ENCODE measurements at regions of chr9 and their contacts with region 1.

Region 1: DNA sequence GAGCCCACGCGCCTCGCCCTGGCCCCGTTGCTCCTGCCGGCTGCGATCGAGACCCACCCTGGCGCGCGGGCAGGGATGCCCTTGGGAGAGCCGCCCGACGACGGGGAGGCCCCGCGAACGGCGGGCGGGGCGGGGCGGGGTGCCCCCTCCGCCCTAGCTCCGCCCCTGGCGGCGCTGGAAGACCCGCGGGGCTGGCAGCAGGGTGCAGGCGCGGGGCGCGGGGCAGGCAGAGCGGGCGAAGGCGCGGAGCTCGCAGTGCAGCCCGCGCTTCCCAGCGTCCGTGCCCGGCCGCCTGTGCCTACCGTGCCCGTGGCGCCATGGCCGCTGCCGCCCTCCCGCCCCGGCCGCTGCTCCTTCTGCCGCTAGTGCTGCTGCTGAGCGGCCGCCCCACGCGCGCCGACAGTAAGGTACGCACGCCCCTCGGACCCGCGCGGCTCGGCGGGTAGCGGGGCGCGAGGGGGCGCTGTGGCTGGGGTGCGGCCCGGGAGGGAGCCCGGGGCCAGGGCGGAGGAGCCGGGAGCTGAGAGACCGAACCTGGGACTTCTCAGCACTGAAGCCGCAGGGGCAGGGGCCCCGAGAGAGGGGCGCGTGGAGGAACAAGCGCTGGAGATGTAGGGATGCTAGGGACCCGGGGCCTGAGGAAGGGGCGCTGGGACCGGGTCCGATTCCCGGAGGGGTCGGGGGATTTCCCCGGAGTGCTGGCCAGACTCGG is at the start of gene OLFML2A:
- DNase-seq: peak; percentile 61
- CTCF ChIP-seq: peak; percentile 45

Region 2: GRCh38 chr9:124749781-124750180 is 27.3 kb before region 1 on chr9:
- CTCF ChIA-PET with region 1: no interaction called
- POLR2A ChIA-PET with region 1: no interaction called
- DNase-seq: no peak
- CTCF ChIP-seq: no peak

Region 3: DNA sequence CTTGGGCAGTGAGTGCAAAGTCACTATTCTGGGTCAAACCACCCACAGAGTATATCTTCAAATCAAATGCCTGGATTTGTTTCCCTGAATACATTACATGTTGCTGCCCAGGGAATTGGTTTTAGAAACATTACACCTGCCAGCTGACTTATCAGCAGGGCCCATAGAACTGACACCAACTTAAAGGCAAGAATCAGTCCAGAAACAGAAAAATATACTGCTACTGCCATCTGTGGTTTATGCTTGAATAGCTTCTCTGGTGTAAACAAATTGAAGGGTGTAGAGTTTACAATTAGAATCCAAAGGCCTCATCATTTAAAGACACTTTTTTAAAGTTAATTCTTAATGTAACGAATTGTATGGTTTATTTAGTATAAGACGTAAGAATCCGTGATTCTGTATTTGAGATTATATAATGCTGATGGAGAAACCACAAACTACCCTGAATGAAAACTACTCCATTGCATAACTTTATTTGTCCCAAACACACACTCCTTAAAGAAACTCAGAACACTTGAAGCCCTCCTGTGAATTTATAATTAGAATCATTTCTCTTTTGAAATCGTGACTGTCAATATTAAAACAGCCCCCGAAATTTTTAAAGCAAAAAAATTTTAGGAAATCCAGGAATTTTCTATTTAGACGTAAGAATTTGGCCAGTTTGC is 12.2 kb before region 1 on chr9:
- CTCF ChIA-PET with region 1: interaction called, 19 read pairs
- POLR2A ChIA-PET with region 1: no interaction called
- DNase-seq: peak; percentile 52
- CTCF ChIP-seq: peak; percentile 24

Measured in GM10248 (cell line).